SK-N-SH (cell line): ENCODE measurements at regions of chr4 and their contacts with region 1.

Region 1: GRCh38 chr4:76511947-76512346 is 76.9 kb downstream of the SHROOM3 start:
- DNase-seq: no peak
- H3K4me3 ChIP-seq: no peak overlapping the region
- H3K27ac ChIP-seq: no peak overlapping the region
- H3K4me1 ChIP-seq: peaks cover 0 to 5% of the 10 kb centered on the region in 2 experiments; a peak in 1 of 4 replicates
- H3K27me3 ChIP-seq: no peaks in the 10 kb centered on the region
- CTCF ChIP-seq: no peak
- EP300 ChIP-seq: no peak
- RAD21 ChIP-seq: no peak

Region 2: DNA sequence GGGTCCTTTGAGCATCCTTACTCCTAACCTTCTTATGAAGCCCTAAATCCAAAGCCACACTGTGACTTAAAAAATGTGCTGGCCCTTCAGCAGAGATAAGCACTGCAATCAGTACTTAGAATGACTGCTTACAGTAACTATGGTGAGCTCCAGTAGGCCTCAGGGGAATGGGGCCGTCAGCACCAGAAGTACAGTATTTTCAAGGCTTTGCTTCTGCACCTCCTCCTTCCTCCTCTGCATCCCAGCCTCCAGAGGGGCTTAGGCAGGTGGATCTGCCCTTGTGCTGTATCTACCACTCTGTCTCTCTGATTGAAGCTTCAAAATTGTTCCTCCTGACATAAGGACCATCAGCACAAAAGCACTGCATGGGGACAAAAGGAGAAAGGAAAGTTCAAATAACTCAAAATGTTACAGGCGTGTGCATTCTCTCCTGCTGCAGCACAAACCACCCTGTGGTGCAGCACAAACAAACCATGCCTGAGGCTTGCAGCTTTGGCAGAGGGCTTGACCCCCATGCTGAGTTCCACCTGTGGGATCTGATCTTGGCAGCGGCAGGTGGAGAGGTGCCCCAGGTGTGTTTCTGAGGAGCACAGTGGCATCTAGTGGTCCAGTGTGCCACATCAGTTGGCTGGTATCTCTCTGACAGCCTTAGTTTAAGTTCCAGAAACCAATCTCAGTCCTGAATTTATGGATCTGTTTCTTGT is 221.3 kb after region 1 on chr4:
- CTCF ChIA-PET with region 1: interaction called, 14 read pairs
- POLR2A ChIA-PET with region 1: no interaction called
- DNase-seq: no peak
- H3K4me3 ChIP-seq: no peak overlapping the region
- H3K27ac ChIP-seq: peak overlapping the region in 1 of 2 experiments; percentile 65; a peak in 2 of 4 replicates
- H3K4me1 ChIP-seq: peaks cover 13 to 28% of the 10 kb centered on the region in 2 experiments
- H3K27me3 ChIP-seq: no peaks in the 10 kb centered on the region
- CTCF ChIP-seq: peak; percentile 25
- EP300 ChIP-seq: no peak
- RAD21 ChIP-seq: peak; percentile 64

Region 3: GRCh38 chr4:76758290-76758882 is 246.4 kb after region 1 on chr4:
- CTCF ChIA-PET with region 1: interaction called, 11 read pairs
- POLR2A ChIA-PET with region 1: no interaction called
- DNase-seq: peak; percentile 71
- H3K4me3 ChIP-seq: no peak overlapping the region; a peak in 1 of 4 replicates
- H3K27ac ChIP-seq: peak overlapping the region; percentile 43 to 47; a peak in 3 of 4 replicates
- H3K4me1 ChIP-seq: peaks cover 10 to 25% of the 10 kb centered on the region in 2 experiments
- H3K27me3 ChIP-seq: no peaks in the 10 kb centered on the region
- CTCF ChIP-seq: peak; percentile 92
- EP300 ChIP-seq: no peak
- RAD21 ChIP-seq: peak; percentile 71